A673 (cell line): ENCODE measurements at regions of chr6 and their contacts with region 1.

Region 1: GRCh38 chr6:4055420-4056041 is 23.4 kb downstream of the FAM217A start:
- DNase-seq: peak; percentile 70
- H3K4me3 ChIP-seq: no peak overlapping the region
- H3K27ac ChIP-seq: no peak overlapping the region
- H3K4me1 ChIP-seq: peaks cover 6% of the 10 kb centered on the region
- H3K27me3 ChIP-seq: no peaks in the 10 kb centered on the region
- CTCF ChIP-seq: peak; percentile 61

Region 2: GRCh38 chr6:4155848-4156466 is 100.4 kb after region 1 on chr6:
- CTCF ChIA-PET with region 1: interaction called, 5 read pairs
- POLR2A ChIA-PET with region 1: no interaction called
- intact Hi-C with region 1: loop called (anchors 1 kb)
- DNase-seq: peak; percentile 84
- H3K4me3 ChIP-seq: no peak overlapping the region
- H3K27ac ChIP-seq: no peak overlapping the region
- H3K4me1 ChIP-seq: peaks cover 6% of the 10 kb centered on the region
- H3K27me3 ChIP-seq: no peaks in the 10 kb centered on the region
- CTCF ChIP-seq: peak; percentile 89

Region 3: GRCh38 chr6:4210629-4211423 is 155.3 kb after region 1 on chr6:
- CTCF ChIA-PET with region 1: no interaction called
- POLR2A ChIA-PET with region 1: no interaction called
- intact Hi-C with region 1: loop called (anchors 5 kb)
- DNase-seq: peak; percentile 73
- H3K4me3 ChIP-seq: no peak overlapping the region
- H3K27ac ChIP-seq: no peak overlapping the region
- H3K4me1 ChIP-seq: no peaks in the 10 kb centered on the region
- H3K27me3 ChIP-seq: no peaks in the 10 kb centered on the region
- CTCF ChIP-seq: peak; percentile 78